ENCODE measurements at regions of chr9 and their contacts with region 1.

Region 1: DNA sequence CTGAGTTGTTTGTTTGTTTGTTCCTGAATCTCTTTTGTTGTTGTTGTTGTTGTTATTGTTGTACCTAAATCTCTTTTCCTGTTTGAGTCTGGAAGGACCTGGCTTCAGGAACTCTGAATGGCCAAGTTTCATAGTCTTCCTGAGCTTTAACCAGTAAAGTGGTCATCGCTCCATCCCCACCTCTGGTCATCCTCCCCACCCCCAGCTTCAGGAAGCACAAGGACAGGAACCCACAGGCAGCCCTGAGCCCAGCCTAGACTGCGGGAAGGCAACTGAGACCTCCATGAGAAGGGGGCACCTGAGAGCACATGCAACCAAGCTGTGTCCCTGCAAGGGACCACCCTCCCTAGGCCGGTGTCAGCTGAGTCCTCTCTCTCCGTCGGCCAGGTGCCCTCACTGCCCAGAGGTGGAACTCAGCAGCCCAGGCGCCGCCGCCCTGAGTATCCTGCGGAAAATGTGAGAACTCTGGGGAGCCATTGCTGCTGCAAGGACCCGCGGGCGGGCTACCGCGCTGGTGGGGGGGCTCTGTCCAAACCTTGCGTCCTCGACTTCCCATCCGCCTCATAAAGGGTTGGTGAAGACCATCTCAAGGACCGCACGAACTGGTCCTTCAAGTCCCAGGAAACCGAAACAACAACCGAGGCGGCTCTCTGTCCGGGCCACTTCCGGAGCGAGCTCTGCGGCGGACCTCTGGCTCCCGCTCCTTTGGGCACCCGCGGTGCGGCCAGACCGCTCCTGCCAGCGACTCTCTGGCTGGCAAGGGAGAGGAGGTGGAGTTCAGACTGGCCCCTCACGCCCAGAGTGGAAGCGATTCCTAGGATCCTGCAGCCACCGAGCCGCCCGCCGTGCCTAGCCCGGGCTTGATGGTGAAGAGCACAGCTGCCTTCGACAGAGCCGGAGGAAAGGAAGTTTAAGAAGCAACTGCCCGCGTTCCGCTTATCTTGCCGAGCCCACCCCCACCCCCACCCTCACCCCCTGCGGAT is 4.2 kb downstream of the BARX1 start:
- DNase-seq: peak; percentile 62
- ATAC-seq: peak; percentile 2; the same call in 1 of the 2 replicates
- H3K4me3 Mint-ChIP-seq: peak overlapping the region; percentile 69
- H3K27ac Mint-ChIP-seq: no peak overlapping the region
- H3K4me1 Mint-ChIP-seq: peaks cover 67% of the 10 kb centered on the region
- H3K27me3 Mint-ChIP-seq: peaks cover 93% of the 10 kb centered on the region
- CTCF ChIP-seq: no peak

Region 2: DNA sequence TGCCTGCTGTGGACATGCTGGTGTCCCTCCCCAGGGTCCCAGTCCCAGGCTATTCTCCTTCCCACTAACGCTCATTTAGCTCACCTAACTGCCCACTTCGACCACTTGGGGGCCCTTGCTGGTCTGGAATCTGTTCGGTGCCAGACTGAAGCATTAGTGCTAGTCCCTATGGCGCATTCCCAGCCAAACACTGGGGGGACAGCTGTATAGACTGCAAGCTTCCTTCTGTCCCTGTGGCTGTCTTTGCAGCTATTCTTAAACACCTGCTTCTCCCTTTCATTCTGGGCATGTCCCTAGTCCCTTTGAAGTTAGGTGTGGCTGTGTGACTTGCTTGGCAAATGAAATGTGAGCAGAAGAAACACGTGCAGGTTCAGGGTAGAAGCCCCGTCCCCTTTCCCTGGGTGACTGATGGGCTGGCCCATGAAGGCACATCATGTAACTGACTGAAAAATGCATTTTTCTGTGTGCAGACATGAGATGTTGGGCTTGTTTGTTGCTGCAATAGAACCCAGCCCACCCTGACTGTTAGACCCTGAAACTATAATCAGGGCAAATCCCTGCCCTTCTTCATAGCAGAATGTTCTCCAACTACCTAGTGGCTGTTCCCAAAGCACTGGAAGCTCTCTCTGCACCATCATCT is 130.1 kb before region 1 on chr9:
- CTCF ChIA-PET with region 1: interaction called, 157 read pairs
- POLR2A ChIA-PET with region 1: no interaction called
- DNase-seq: peak; percentile 60
- ATAC-seq: peak; percentile 94
- H3K4me3 Mint-ChIP-seq: no peak overlapping the region
- H3K27ac Mint-ChIP-seq: no peak overlapping the region
- H3K4me1 Mint-ChIP-seq: peaks cover under 1% of the 10 kb centered on the region; the same call in 1 of the 2 replicates
- H3K27me3 Mint-ChIP-seq: peaks cover 7% of the 10 kb centered on the region
- CTCF ChIP-seq: no peak

Region 3: DNA sequence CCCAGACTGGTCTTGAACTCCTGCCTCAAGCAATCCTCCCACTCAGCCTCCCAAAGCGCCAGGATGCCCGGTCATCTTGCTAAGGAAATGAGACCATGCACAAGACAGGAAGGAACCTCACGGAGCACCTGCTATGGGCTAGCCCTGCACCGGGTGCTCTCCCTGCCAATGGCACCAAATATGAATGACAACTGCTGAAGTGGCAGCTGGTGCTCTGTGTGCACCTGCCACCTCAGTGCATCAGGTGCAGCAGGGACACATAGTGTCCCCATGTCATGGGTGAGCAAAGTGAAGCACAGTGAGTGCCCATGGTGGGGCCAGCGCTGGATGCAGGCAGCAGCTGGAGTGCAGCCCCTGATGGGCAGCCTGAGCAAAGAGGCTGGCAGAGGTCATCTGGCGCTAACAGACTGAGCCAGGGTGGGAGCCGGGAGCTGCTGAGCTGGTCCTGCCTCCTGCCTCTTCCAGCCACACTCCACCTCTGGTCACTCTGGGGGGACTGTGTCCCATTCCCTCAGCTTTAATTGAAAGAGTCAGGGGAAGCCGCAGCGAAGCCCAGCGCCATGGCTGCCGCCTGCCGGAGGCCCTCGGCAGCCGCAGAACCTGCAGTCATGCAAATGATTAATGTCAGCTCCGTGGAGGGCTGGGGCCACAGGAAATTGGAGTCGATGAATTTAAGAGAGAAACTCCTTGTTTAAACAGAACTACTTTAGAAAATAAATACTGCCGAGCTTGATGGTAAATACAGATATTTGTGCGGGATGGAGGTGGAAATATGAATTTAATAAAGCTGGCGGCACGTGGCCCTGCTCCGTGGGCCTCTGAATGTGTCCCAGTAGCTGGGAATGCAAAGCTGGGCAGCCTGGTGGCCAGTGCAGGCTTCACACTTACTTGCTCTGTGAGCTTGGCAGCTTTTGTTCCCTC is 42.1 kb before region 1 on chr9:
- CTCF ChIA-PET with region 1: interaction called, 10 read pairs
- POLR2A ChIA-PET with region 1: no interaction called
- DNase-seq: no peak
- ATAC-seq: no peak
- H3K4me3 Mint-ChIP-seq: no peak overlapping the region
- H3K27ac Mint-ChIP-seq: no peak overlapping the region
- H3K4me1 Mint-ChIP-seq: peaks cover 15% of the 10 kb centered on the region
- H3K27me3 Mint-ChIP-seq: no peaks in the 10 kb centered on the region
- CTCF ChIP-seq: no peak